ENCODE measurements at regions of chr5 and their contacts with region 1.

Region 1: GRCh38 chr5:134527146-134527960 is 1.9 kb downstream of the JADE2 start:
- DNase-seq: peak; percentile 84 to 94
- H3K4me3 ChIP-seq: peak overlapping the region; percentile 75 to 95
- H3K27ac ChIP-seq: peak overlapping the region; percentile 97 to 99
- H3K4me1 ChIP-seq: peaks cover 0 to 56% (median 52%) of the 10 kb centered on the region in 4 donors
- H3K27me3 ChIP-seq: no peaks in the 10 kb centered on the region
- CTCF ChIP-seq: peak; percentile 95 to 99

Region 2: GRCh38 chr5:134225618-134226440 is 301.5 kb before region 1 on chr5 and contains the start of gene PPP2CA:
- intact Hi-C with region 1: loop called (anchors 10 kb)
- DNase-seq: peak; percentile 98 to 99
- H3K4me3 ChIP-seq: peak within 1 kb of the TSS; percentile 93 to 94
- H3K27ac ChIP-seq: peak within 1 kb of the TSS; percentile 99
- H3K4me1 ChIP-seq: peaks cover 0 to 47% (median 18%) of the 10 kb centered on the region in 4 donors
- H3K27me3 ChIP-seq: no peaks in the 10 kb centered on the region
- CTCF ChIP-seq: no peak

Region 3: GRCh38 chr5:134370871-134371833 is 156.2 kb before region 1 on chr5 and contains the start of gene UBE2B:
- intact Hi-C with region 1: loop called (anchors 2 kb)
- DNase-seq: peak; percentile 99 to 100
- H3K4me3 ChIP-seq: peak within 1 kb of the TSS; percentile 90 to 100
- H3K27ac ChIP-seq: peak within 1 kb of the TSS; percentile 94 to 98
- H3K4me1 ChIP-seq: peaks cover 0 to 58% (median 12%) of the 10 kb centered on the region in 4 donors
- H3K27me3 ChIP-seq: no peaks in the 10 kb centered on the region
- CTCF ChIP-seq: no peak

Region 4: DNA sequence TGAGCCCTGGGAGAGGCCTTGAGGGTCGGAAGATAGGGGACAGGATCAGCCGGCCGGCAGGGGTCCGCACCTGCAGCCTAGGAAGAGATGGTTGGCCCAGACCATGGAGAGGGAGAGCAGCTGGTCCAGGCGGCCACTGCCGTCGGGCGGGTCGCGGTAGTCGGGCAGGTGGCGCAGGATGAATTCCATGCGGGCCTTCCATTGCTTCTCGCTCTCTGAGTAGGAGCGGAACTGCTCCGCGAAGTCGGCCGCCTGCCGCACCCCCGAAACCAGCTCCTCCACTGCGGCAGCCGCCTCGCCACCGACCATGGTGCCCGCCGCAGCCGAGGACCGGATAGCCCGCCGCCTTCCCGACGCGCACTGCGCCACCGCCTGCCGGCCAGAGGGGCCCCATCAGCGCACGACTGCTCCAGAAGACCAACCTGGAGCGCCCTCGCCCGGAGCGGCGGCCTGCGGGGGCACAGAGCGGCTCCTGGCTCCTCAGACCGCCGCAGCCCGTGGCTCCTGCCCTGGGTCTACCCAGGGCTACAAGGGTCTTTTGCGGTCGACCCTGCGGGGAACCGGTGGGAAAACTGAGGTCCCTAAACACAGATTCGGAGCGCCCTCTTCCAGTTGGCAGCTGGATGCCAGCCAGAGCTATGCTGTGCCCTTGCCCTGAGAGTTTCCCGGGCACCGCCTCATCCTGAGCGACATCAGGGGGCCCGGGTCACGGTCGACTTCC is 115.6 kb before region 1 on chr5 and contains the start of gene CDKN2AIPNL:
- intact Hi-C with region 1: loop called (anchors 5 kb)
- DNase-seq: peak; percentile 90 to 95
- H3K4me3 ChIP-seq: peak within 1 kb of the TSS; percentile 93 to 95
- H3K27ac ChIP-seq: peak within 1 kb of the TSS; percentile 78 to 84
- H3K4me1 ChIP-seq: peaks cover 0 to 23% (median 22%) of the 10 kb centered on the region in 4 donors
- H3K27me3 ChIP-seq: no peaks in the 10 kb centered on the region
- CTCF ChIP-seq: peak; percentile 81 to 88

Region 5: GRCh38 chr5:134465816-134466240 is 61.5 kb before region 1 on chr5:
- intact Hi-C with region 1: loop called (anchors 2 kb)
- DNase-seq: peak; percentile 90 to 95
- H3K4me3 ChIP-seq: peak overlapping the region; percentile 52 to 61
- H3K27ac ChIP-seq: peak overlapping the region; percentile 94
- H3K4me1 ChIP-seq: peaks cover 0 to 27% (median 23%) of the 10 kb centered on the region in 4 donors
- H3K27me3 ChIP-seq: no peaks in the 10 kb centered on the region
- CTCF ChIP-seq: no peak

Region 6: DNA sequence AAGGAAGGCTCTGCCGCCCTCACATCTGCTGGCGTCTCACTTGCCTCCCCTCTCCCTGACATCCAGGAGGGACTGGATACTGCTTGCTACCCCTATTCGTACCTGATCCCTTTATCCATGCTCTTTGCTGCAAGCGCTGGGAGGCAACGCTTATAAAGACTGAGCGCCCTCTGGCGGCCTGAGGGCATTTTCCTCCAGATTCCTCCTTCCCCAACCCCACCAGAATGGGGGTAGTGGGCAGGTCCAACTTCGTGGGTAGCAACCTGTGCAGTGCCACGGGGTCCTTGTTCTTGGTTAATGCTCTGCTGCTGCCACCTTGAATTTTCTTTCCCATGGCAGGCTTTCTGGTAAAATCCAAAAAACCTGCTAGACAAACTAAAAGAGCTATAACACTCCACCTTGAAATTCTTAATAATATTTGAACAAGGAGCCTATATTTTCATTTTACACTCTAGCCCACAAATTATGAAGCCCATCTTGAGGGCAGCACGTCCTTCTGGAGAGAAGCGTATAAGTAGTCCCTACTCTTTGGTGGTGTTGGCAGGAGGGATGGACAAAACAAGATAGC is 50.5 kb after region 1 on chr5:
- intact Hi-C with region 1: loop called (anchors 5 kb)
- DNase-seq: peak; percentile 80 to 87
- H3K4me3 ChIP-seq: no peak overlapping the region
- H3K27ac ChIP-seq: peak overlapping the region in 1 of 2 donors; percentile 40
- H3K4me1 ChIP-seq: peaks cover 4 to 31% (median 16%) of the 10 kb centered on the region in 4 donors
- H3K27me3 ChIP-seq: no peaks in the 10 kb centered on the region
- CTCF ChIP-seq: peak; percentile 84 to 86

Region 7: GRCh38 chr5:134692722-134693121 is 165.4 kb after region 1 on chr5:
- intact Hi-C with region 1: no loop called
- DNase-seq: no peak
- H3K4me3 ChIP-seq: no peak overlapping the region
- H3K27ac ChIP-seq: no peak overlapping the region
- H3K4me1 ChIP-seq: no peaks in the 10 kb centered on the region
- H3K27me3 ChIP-seq: no peaks in the 10 kb centered on the region
- CTCF ChIP-seq: no peak

Region 8: GRCh38 chr5:134798468-134798867 is 271.1 kb after region 1 on chr5:
- intact Hi-C with region 1: no loop called
- DNase-seq: no peak
- H3K4me3 ChIP-seq: no peak overlapping the region
- H3K27ac ChIP-seq: no peak overlapping the region
- H3K4me1 ChIP-seq: no peaks in the 10 kb centered on the region
- H3K27me3 ChIP-seq: no peaks in the 10 kb centered on the region
- CTCF ChIP-seq: no peak